ENCODE measurements at regions of chr2 and their contacts with region 1.

Region 1: GRCh38 chr2:174461221-174461620 is 25.6 kb downstream of the GPR155 start:
- DNase-seq: no peak
- ATAC-seq: no peak
- H3K4me3 ChIP-seq: no peak overlapping the region
- H3K27ac ChIP-seq: no peak overlapping the region
- H3K4me1 ChIP-seq: no peaks in the 10 kb centered on the region
- H3K27me3 ChIP-seq: no peaks in the 10 kb centered on the region
- CTCF ChIP-seq: no peak

Region 2: DNA sequence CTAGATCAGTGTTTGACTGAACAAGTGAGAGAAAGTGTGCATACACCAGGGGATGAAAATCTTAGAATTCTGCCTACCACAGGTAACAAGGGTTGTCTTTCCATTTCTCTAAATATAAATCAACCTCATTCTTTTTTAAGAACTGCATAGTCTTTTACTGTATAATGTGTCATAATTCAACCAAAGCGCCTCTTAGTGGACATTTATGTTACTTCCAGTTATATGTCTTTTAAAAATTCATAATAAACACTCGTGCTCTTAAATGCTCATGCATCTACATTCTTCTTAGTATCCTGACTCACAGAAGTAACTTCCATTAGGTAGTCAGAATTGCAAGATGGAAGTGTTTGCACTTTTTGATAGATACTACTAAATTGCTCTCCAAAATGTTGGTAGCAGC is 226.9 kb after region 1 on chr2:
- intact Hi-C with region 1: loop called (anchors 5 kb)
- DNase-seq: no peak
- ATAC-seq: peak in 1 of 2 donors; percentile 49
- H3K4me3 ChIP-seq: no peak overlapping the region
- H3K27ac ChIP-seq: no peak overlapping the region
- H3K4me1 ChIP-seq: peaks cover 6% of the 10 kb centered on the region
- H3K27me3 ChIP-seq: no peaks in the 10 kb centered on the region
- CTCF ChIP-seq: peak; percentile 47